ENCODE measurements at regions of chr1 and their contacts with region 1.

Region 1: DNA sequence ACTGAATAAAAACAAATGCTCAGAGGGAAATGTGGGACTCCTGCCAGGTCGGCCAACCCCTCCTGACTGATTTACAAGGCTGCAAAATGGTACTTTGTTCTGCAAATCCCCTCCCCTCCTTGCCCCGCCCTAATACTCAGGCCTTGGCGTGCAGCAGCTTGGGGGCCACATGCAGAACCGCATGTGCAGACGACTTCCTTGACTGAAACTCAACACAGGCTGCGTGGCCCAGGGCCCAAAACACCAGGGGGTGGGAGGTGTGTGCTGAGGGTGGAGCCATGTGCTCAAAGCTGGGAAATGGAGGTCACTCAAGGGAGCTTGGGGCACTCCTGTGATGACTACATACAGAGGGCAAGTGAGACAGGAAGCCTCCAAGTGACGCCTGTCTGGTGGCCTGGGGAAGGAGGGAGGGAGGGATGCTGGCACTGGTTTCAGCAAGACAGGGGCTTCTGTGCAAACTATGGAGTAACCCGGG is 87.2 kb downstream of the MRPL37 start:
- DNase-seq: peak; percentile 87
- H3K4me3 ChIP-seq: no peak overlapping the region
- H3K27ac ChIP-seq: peak overlapping the region; percentile 72 to 73
- H3K4me1 ChIP-seq: peaks cover 44% of the 10 kb centered on the region
- H3K27me3 ChIP-seq: no peaks in the 10 kb centered on the region
- CTCF ChIP-seq: no peak
- POLR2A ChIP-seq: peak; percentile 30

Region 2: GRCh38 chr1:54335755-54336108 is 48.5 kb after region 1 on chr1:
- intact Hi-C with region 1: loop called (anchors 5 kb)
- DNase-seq: no peak
- H3K4me3 ChIP-seq: no peak overlapping the region
- H3K27ac ChIP-seq: peak overlapping the region; percentile 64 to 66
- H3K4me1 ChIP-seq: peaks cover 23% of the 10 kb centered on the region
- H3K27me3 ChIP-seq: no peaks in the 10 kb centered on the region
- CTCF ChIP-seq: no peak
- POLR2A ChIP-seq: no peak